ENCODE measurements at regions of chr1 and their contacts with region 1.

Region 1: DNA sequence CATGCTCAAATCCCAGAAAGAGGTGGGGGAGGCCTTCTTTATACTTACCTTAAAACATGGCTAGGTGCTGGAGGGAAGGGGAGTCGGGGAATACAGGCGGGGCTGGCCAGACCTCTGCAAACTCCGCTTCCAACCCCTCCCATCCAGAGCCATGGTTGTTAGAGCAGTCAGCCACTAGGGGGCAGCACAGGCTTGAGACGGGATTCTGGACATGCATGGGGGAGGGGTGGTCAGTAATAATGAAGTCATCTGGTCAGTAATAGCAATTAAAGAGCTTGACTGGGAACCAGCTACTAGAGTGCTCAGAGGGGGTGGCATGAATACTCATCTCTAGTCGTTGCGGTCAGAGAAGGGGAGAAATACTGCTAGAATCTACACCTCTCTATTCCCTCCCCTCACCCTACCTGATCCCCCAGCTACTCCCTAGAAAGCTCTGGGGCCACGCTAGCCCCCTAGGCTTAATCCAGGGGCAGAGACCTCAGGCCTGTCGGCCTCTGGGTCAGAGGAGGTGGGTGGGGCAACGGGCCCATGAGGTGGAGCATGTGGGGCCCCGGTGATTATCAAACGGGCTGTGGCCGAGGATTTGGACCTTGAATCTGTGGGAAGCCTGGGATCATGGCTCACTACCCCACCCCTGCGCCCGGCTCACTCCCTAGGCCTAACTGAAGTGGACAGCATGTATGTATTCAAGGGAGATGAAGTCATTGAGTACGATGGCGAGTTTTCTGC is 2.9 kb downstream of the CASQ1 start:
- DNase-seq: peak; percentile 88
- ATAC-seq: peak; percentile 88

Region 2: GRCh38 chr1:160018900-160019299 is 174.4 kb before region 1 on chr1:
- intact Hi-C with region 1: no loop called
- DNase-seq: no peak
- ATAC-seq: no peak

Region 3: DNA sequence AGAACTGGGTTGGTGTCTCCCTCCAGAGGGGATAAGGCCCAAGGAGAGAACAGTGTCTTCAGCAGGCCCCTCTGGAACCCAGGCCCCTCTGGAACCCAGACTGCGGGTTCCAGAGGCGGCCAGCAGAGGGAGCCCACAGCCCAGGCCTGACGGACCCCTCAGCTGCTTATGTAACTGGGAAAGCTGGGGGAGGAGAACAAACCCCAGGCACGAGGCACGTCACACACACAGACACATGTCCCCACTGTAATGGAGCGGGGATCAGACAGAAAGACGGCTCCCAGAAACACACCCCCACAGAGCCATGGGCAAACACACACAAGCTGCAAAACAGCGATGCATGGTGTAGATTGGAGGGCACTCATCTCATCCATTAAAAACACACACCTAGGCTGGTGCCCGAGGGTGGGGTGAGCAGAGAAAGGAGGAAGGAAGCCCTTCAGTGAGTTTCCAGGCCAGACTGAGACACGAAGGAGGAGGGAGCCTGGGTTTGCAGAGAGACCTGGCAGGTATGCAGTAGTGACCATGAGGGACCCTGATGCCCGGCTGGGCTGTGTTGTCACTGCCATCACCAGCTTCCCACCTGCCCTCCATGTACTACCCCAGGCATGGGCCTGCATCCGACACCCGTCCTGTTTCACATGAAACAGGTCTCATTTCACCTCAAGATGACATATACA is 92.1 kb before region 1 on chr1:
- intact Hi-C with region 1: loop called (anchors 5 kb)
- DNase-seq: peak; percentile 87
- ATAC-seq: peak; percentile 48

Region 4: GRCh38 chr1:160251687-160252526 is 58.7 kb after region 1 on chr1:
- intact Hi-C with region 1: loop called (anchors 5 kb)
- DNase-seq: no peak
- ATAC-seq: peak; percentile 93

Region 5: DNA sequence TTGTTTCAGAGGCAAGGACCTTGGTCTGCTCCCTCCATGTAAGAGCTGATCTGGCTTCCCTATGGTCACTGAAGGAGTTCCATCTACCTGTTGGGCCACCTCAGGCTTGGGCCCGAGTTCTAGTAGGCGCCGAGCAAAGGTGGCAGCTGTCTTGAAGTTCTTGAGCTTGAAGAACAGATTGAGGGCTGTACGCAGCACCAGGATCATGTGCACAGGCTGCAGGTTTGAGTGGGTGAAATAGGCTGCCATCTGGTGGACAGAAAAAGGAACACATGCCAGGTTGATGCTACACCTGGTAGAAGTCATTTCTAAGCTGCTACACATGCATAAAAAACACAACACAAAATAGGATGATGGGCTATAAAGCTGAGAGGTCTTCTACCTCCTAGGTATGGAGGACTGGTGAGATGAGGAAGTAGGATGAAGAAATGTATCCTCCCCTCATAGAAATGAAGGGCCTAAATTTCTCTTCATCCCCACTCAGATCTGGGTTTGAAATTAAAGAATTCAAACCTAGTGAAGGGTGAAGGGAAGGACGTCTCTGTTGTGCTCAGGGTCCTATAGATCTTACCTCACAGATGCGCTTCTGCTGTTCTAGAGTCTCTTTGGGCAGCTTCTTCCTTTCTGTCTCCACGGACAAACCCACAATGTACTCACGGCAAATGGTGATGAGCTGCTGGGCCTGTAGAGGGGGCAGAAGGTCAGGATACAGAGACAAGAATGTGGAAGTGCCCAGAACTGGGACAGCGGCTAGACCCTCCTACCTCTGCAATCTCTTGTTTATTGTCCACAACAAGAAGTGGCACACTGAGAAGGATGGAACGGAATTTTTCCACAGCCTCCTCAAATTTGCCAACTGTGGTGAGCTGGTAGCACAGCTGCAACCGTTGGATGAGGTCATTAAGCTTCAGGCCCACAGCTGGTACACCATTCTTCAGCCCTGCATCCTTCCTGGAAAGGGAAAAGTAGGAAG is 98.3 kb after region 1 on chr1:
- intact Hi-C with region 1: loop called (anchors 5 kb)
- DNase-seq: peak; percentile 60
- ATAC-seq: peak; percentile 88

Measured in Right ventricle myocardium superior (tissue), 1 donor.